ENCODE measurements at regions of chr14 and their contacts with region 1.

Region 1: GRCh38 chr14:88189417-88190191 is 133.5 kb downstream of the KCNK10 start:
- DNase-seq: peak; percentile 88
- H3K4me3 Mint-ChIP-seq: no peak overlapping the region
- H3K27ac Mint-ChIP-seq: no peak overlapping the region
- H3K4me1 Mint-ChIP-seq: peaks cover 7% of the 10 kb centered on the region
- H3K27me3 Mint-ChIP-seq: peaks cover 56% of the 10 kb centered on the region
- CTCF ChIP-seq: peak; percentile 69

Region 2: GRCh38 chr14:88013750-88014349 is 175.8 kb before region 1 on chr14:
- CTCF ChIA-PET with region 1: interaction called, 10 read pairs
- POLR2A ChIA-PET with region 1: no interaction called
- intact Hi-C with region 1: no loop called
- DNase-seq: peak; percentile 69
- H3K4me3 Mint-ChIP-seq: no peak overlapping the region
- H3K27ac Mint-ChIP-seq: no peak overlapping the region
- H3K4me1 Mint-ChIP-seq: no peaks in the 10 kb centered on the region
- H3K27me3 Mint-ChIP-seq: peaks cover 46% of the 10 kb centered on the region
- CTCF ChIP-seq: peak; percentile 92

Region 3: DNA sequence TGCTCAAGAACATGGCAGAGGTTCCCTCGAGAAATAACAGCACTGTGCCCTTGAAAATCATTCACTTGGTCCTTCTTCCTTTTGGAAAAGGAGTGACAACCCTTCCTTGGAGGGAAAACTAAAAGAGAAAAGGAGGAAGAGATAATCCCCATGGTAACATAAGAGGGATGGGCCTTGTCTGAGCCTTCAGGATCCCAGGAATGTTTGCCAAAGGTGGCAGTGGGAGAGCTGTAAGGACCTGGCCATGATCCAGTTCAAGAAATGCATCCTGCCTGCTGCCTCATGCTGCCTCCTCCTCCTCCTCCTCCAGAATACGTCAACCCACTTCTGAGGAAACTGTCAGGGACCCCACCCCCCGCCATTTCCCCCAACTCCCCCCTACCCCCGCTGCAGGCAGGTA is 14.6 kb after region 1 on chr14:
- CTCF ChIA-PET with region 1: interaction called, 52 read pairs
- POLR2A ChIA-PET with region 1: no interaction called
- intact Hi-C with region 1: no loop called
- DNase-seq: no peak
- H3K4me3 Mint-ChIP-seq: no peak overlapping the region
- H3K27ac Mint-ChIP-seq: no peak overlapping the region
- H3K4me1 Mint-ChIP-seq: no peaks in the 10 kb centered on the region
- H3K27me3 Mint-ChIP-seq: peaks cover 53% of the 10 kb centered on the region
- CTCF ChIP-seq: no peak

Region 4: DNA sequence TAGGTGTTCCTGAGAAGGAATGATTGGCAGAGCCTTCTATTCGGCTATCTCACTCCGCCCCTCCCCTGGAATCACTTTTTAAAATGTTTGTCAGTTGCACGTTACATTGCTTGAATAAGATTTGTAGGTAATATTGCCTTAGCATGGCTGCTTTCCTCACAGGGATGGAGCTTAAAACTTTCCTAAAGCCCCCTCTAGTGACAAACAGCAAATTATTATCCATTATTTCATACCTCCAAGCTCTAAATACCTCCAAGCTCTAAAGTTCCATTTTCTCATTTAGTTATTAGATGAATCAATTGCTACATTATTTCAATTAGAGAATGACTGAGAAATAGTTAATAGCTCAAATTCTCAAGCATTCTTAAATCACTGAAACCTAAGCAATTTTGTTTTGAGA is 190.8 kb after region 1 on chr14:
- CTCF ChIA-PET with region 1: interaction called, 84 read pairs
- POLR2A ChIA-PET with region 1: interaction called, 8 read pairs
- intact Hi-C with region 1: loop called (anchors 1 kb)
- DNase-seq: peak; percentile 8
- H3K4me3 Mint-ChIP-seq: no peak overlapping the region
- H3K27ac Mint-ChIP-seq: no peak overlapping the region
- H3K4me1 Mint-ChIP-seq: no peaks in the 10 kb centered on the region
- H3K27me3 Mint-ChIP-seq: peaks cover 15% of the 10 kb centered on the region
- CTCF ChIP-seq: peak; percentile 21

Region 5: DNA sequence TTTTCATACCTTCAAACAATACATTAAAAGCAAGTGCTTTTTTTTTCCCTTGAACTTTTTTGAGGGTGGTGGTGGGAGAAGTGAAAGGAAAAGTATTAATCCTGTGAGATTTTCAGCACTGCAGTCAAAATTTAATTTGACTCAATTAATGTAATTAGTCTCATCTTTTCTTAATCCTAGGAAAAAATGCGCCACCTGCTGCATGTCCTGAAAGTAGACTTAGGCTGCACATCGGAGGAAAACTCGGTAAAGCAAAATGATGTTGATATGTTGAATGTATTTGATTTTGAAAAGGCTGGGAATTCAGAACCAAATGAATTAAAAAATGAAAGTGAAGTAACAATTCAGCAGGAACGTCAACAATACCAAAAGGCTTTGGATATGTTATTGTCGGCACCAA is 248.1 kb after region 1 on chr14:
- CTCF ChIA-PET with region 1: interaction called, 7 read pairs
- POLR2A ChIA-PET with region 1: interaction called, 3 read pairs
- intact Hi-C with region 1: loop called (anchors 2 kb)
- DNase-seq: no peak
- H3K4me3 Mint-ChIP-seq: no peak overlapping the region
- H3K27ac Mint-ChIP-seq: no peak overlapping the region
- H3K4me1 Mint-ChIP-seq: no peaks in the 10 kb centered on the region
- H3K27me3 Mint-ChIP-seq: no peaks in the 10 kb centered on the region
- CTCF ChIP-seq: no peak

Region 6: DNA sequence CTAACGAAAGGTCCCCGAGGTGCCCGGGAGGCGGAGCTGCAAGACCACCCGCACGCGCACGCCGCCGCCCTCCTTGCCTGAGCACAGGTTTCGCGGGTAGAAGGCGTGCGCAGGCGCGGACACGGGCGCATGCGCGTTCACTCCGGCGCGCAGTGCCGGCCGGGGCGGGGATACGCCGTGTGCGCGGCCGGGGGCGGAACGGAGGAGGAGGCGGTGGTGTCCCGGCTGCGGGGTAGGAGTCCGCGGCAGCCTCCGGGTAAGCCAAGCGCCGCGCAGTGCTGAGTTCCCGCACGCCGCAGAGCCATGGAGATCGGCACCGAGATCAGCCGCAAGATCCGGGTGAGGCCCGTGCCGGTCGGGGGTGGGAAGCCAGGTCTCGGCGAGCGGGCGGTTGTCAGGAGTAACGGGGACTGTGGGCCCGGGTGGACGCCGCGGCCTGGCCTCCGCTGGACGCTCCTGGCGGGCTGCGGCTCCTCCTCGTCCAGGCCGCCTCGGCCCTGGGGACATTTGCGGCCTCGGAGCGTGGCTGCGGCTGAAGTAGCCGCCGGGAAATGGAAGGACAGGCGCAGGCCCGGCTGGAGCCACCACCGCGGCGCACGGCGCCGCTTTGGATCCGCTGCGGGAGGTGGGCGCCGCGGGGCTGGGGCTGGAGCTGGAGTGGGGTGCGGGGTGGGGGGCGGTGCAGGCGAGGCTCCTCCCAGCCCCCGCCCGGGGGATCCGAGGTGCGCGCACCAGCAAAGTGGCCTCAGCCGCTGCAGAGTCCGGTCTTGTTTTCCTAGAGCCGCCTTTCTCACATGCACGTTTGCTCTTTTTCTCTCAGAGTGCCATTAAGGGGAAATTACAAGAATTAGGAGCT is 373.5 kb after region 1 on chr14 and contains the start of gene ZC3H14:
- CTCF ChIA-PET with region 1: interaction called, 13 read pairs
- POLR2A ChIA-PET with region 1: interaction called, 5 read pairs
- intact Hi-C with region 1: loop called (anchors 2 kb)
- DNase-seq: peak; percentile 85
- H3K4me3 Mint-ChIP-seq: peak within 1 kb of the TSS; percentile 77
- H3K27ac Mint-ChIP-seq: peak within 1 kb of the TSS; percentile 49
- H3K4me1 Mint-ChIP-seq: peaks cover 18% of the 10 kb centered on the region
- H3K27me3 Mint-ChIP-seq: no peaks in the 10 kb centered on the region
- CTCF ChIP-seq: no peak
- total RNA-seq, gene ZC3H14: 64.5 and 72.6 TPM in 2 replicates

Measured in MCF 10A (cell line).